ENCODE measurements at regions of chr2 and their contacts with region 1.

Region 1: GRCh38 chr2:203706403-203706802 is at the start of gene CD28:
- DNase-seq: peak; percentile 98
- H3K4me3 ChIP-seq: peak within 1 kb of the TSS; percentile 71
- H3K27ac ChIP-seq: peak within 1 kb of the TSS; percentile 83
- H3K4me1 ChIP-seq: peaks cover 70% of the 10 kb centered on the region
- CTCF ChIP-seq: no peak
- total RNA-seq, gene CD28: 0.49 and 0.92 TPM in 2 replicates

Region 2: GRCh38 chr2:203535078-203535783 is 171.2 kb before region 1 on chr2 and contains the start of gene RAPH1:
- CTCF ChIA-PET with region 1: no interaction called
- POLR2A ChIA-PET with region 1: interaction called, 4 read pairs
- intact Hi-C with region 1: loop called (anchors 5 kb)
- DNase-seq: peak; percentile 82
- H3K4me3 ChIP-seq: peak within 1 kb of the TSS; percentile 90
- H3K27ac ChIP-seq: peak within 1 kb of the TSS; percentile 58
- H3K4me1 ChIP-seq: peaks cover 31% of the 10 kb centered on the region
- CTCF ChIP-seq: no peak
- total RNA-seq, gene RAPH1: 4.0 and 4.5 TPM in 2 replicates

Region 3: DNA sequence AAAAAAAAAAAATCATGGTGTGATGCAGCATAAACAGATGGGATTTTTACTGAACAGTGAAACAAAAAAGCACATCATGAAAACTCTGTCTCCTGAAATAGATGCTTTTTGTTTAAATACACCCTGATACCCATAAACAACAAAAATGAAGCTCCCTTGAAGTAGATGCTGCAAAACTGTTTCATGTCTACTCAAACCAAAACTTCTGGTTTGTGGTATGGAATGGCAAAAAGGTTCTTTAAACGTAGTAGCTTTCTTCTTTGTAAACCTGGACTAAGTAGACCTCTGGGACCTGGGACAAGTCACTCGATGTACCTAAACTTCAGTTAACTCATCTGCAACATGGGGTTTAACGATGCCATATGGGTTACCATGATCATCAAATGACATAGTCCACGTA is 106.9 kb before region 1 on chr2:
- CTCF ChIA-PET with region 1: no interaction called
- POLR2A ChIA-PET with region 1: interaction called, 3 read pairs
- intact Hi-C with region 1: loop called (anchors 2 kb)
- DNase-seq: no peak
- H3K4me3 ChIP-seq: peak overlapping the region; percentile 61
- H3K27ac ChIP-seq: peak overlapping the region; percentile 91
- H3K4me1 ChIP-seq: peaks cover 61% of the 10 kb centered on the region
- CTCF ChIP-seq: no peak

Region 4: DNA sequence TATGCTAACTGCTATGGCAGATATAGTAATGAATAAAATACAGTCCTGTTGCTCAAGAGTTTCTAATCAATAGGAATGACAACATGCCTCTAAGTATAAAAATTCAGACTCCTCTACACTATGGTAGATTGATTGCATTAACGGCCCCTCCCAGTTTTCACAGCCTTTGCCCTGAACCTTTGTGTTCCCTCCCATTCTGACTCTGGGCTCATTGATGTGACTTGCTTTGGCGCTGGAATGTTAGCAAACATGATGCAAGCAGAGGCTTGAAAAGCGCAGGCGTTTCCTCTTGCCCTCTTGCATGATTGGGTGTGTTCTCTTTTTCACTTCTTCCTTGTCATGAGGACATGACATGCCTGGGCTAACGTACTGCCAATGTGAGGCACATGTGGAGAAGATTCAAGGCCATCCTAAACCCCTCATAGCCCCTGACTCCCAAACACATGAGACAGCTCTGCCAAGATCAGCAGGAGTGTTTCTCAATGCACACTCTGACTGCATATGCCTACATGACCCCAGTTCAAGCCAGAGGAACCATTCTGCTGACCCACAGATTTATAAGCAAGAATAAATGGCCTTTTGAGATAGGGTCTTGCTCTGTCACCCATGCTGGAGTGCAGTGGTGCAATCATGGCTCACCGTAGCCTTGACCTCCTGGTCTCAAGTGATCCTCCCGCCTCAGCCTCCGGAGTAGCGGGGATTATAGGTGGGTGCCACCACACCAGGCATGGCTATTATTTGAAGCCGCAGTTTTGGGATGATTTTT is 49.7 kb before region 1 on chr2:
- CTCF ChIA-PET with region 1: no interaction called
- POLR2A ChIA-PET with region 1: interaction called, 5 read pairs
- intact Hi-C with region 1: loop called (anchors 1 kb)
- DNase-seq: peak; percentile 67
- H3K4me3 ChIP-seq: no peak overlapping the region
- H3K27ac ChIP-seq: peak overlapping the region; percentile 18
- H3K4me1 ChIP-seq: peaks cover 72% of the 10 kb centered on the region
- CTCF ChIP-seq: no peak

Region 5: GRCh38 chr2:203689426-203690116 is 16.8 kb before region 1 on chr2:
- CTCF ChIA-PET with region 1: interaction called, 3 read pairs
- POLR2A ChIA-PET with region 1: interaction called, 24 read pairs
- intact Hi-C with region 1: loop called (anchors 1 kb)
- DNase-seq: peak; percentile 67
- H3K4me3 ChIP-seq: peak overlapping the region; percentile 61
- H3K27ac ChIP-seq: peak overlapping the region; percentile 93
- H3K4me1 ChIP-seq: peaks cover 82% of the 10 kb centered on the region
- CTCF ChIP-seq: no peak

Region 6: GRCh38 chr2:203782262-203782976 is 76.0 kb after region 1 on chr2:
- CTCF ChIA-PET with region 1: no interaction called
- POLR2A ChIA-PET with region 1: no interaction called
- intact Hi-C with region 1: loop called (anchors 5 kb)
- DNase-seq: peak; percentile 73
- H3K4me3 ChIP-seq: no peak overlapping the region
- H3K27ac ChIP-seq: no peak overlapping the region
- H3K4me1 ChIP-seq: peaks cover 31% of the 10 kb centered on the region
- CTCF ChIP-seq: peak; percentile 92

Region 7: DNA sequence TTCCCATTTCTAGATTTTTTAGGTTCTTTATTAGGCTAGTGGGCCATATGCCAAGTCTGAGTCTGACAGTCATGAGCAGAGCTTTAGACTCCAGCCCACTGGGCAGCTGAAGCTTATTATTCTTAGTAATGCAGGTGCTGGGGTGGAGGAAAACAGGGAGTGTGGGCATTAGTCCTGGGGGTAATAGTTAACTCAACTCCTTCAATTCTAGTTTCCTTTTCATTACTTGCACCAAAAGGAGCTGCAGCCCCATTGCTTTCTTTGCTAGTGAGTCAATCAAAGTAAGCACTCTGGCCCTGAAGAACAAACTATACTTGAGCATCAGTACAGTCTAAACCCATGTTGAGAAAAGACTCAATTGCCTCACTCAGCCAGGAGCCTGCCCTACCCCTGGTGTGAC is 265.7 kb after region 1 on chr2:
- CTCF ChIA-PET with region 1: no interaction called
- POLR2A ChIA-PET with region 1: no interaction called
- intact Hi-C with region 1: no loop called
- DNase-seq: no peak
- H3K4me3 ChIP-seq: no peak overlapping the region
- H3K27ac ChIP-seq: no peak overlapping the region
- H3K4me1 ChIP-seq: no peaks in the 10 kb centered on the region
- CTCF ChIP-seq: no peak

Measured in OCI-LY7 (cell line).